CD4-positive, alpha-beta T cell (primary cell): ENCODE measurements at regions of chr6 and their contacts with region 1.

Region 1: GRCh38 chr6:85065831-85066230 is 301.4 kb upstream of the TBX18 start:
- DNase-seq: no peak
- ATAC-seq: no peak
- H3K4me3 ChIP-seq: no peak overlapping the region
- H3K4me3 Mint-ChIP-seq: no peak overlapping the region
- H3K27ac ChIP-seq: no peak overlapping the region
- H3K27ac Mint-ChIP-seq: no peak overlapping the region
- H3K4me1 ChIP-seq: no peaks in the 10 kb centered on the region
- H3K4me1 Mint-ChIP-seq: no peaks in the 10 kb centered on the region
- H3K27me3 ChIP-seq: no peaks in the 10 kb centered on the region
- H3K27me3 Mint-ChIP-seq: no peaks in the 10 kb centered on the region
- CTCF ChIP-seq: no peak

Region 2: DNA sequence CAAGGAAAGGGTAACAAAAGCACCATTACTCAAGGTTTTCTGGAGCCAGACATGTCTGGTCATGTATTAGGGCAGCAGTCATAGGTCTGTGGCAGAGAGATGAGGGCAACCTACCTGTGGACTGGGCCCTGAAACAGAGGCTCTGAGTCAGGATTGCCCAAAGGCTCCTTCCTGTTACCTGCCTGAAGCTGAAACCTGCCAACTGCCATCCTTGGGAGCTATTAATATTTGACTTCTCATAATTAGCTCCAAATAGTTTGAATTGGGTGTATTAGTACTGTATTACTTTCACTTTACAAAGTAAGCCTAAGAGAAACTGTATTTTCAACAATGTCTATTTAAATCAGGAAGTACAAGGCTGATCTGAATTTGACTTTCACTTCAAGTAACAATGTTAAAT is 229.5 kb before region 1 on chr6:
- CTCF ChIA-PET with region 1: no interaction called
- POLR2A ChIA-PET with region 1: no interaction called
- intact Hi-C with region 1: loop called in 1 of 2 experiments (anchors 10 kb)
- DNase-seq: no peak
- ATAC-seq: no peak
- H3K4me3 ChIP-seq: no peak overlapping the region
- H3K4me3 Mint-ChIP-seq: no peak overlapping the region
- H3K27ac ChIP-seq: no peak overlapping the region
- H3K27ac Mint-ChIP-seq: no peak overlapping the region
- H3K4me1 ChIP-seq: no peaks in the 10 kb centered on the region
- H3K4me1 Mint-ChIP-seq: no peaks in the 10 kb centered on the region
- H3K27me3 ChIP-seq: no peaks in the 10 kb centered on the region
- H3K27me3 Mint-ChIP-seq: no peaks in the 10 kb centered on the region
- CTCF ChIP-seq: no peak

Region 3: DNA sequence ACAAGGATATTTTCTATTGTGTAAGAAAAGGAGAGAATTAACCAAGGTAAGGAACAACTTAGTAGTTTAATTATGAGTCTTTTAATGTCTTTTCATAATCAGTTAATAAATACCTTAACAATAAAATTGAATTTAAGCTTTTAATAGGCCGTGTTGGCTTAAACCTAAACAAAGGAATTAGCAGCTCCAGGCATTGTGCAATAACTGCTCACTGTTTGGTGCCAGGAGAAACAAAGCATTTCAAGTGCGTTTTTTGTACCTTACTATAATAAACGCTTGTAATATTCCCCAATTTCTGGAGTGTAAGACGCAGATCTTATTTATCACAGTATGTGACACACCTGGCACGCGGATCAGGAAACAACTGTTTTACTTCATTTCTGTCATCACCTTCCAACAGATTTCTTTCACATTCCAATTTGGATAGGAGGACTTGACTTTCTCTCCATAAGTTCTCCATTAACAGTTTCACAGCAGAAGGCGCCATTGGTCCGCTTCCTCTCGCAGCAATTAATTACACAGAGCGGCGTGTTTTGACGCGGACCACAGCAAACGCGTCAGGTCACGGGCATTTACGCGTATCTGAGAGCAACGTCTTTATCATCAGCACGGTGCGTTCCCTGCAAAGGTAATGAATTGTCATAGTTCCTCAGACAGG is 48.2 kb after region 1 on chr6:
- CTCF ChIA-PET with region 1: no interaction called
- POLR2A ChIA-PET with region 1: no interaction called
- intact Hi-C with region 1: no loop called
- DNase-seq: no peak
- ATAC-seq: no peak
- H3K4me3 ChIP-seq: no peak overlapping the region
- H3K4me3 Mint-ChIP-seq: no peak overlapping the region
- H3K27ac ChIP-seq: no peak overlapping the region
- H3K27ac Mint-ChIP-seq: no peak overlapping the region
- H3K4me1 ChIP-seq: no peaks in the 10 kb centered on the region
- H3K4me1 Mint-ChIP-seq: no peaks in the 10 kb centered on the region
- H3K27me3 ChIP-seq: no peaks in the 10 kb centered on the region
- H3K27me3 Mint-ChIP-seq: no peaks in the 10 kb centered on the region
- CTCF ChIP-seq: no peak

Region 4: GRCh38 chr6:85404502-85405174 is 338.8 kb after region 1 on chr6:
- CTCF ChIA-PET with region 1: no interaction called
- POLR2A ChIA-PET with region 1: no interaction called
- intact Hi-C with region 1: no loop called
- DNase-seq: no peak
- ATAC-seq: no peak
- H3K4me3 ChIP-seq: no peak overlapping the region
- H3K4me3 Mint-ChIP-seq: no peak overlapping the region
- H3K27ac ChIP-seq: no peak overlapping the region
- H3K27ac Mint-ChIP-seq: no peak overlapping the region
- H3K4me1 ChIP-seq: peaks cover 26% of the 10 kb centered on the region
- H3K4me1 Mint-ChIP-seq: peaks cover 23% of the 10 kb centered on the region
- H3K27me3 ChIP-seq: no peaks in the 10 kb centered on the region
- H3K27me3 Mint-ChIP-seq: no peaks in the 10 kb centered on the region
- CTCF ChIP-seq: no peak